CD4-positive, alpha-beta T cell (primary cell): ENCODE measurements at regions of chrX and their contacts with region 1.

Region 1: DNA sequence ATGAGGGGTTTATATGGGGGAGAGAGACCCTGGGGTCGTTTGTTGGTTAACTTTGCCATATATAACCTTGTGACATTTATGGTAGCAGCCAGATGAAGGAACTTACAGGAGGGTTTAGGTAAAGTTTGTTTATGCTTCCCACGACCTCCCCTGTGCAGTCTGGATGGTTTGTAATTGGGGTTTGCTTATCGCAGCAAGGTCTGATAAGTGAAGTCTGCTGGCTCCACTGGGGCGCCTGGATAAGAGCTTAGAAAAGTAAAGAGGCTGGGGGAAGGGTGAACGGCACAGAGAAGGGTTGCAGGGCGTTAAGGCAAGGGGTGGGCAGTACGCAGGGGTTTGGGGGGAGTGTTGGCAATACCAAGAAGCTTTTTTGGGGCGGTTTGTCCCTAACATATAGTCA is 98.7 kb downstream of the KDM6A start:
- DNase-seq: no peak
- ATAC-seq: no peak
- H3K4me3 ChIP-seq: no peak overlapping the region
- H3K4me3 Mint-ChIP-seq: no peak overlapping the region
- H3K27ac ChIP-seq: no peak overlapping the region
- H3K27ac Mint-ChIP-seq: no peak overlapping the region
- H3K4me1 ChIP-seq: no peaks in the 10 kb centered on the region
- H3K4me1 Mint-ChIP-seq: peaks cover 15% of the 10 kb centered on the region
- H3K27me3 ChIP-seq: no peaks in the 10 kb centered on the region
- H3K27me3 Mint-ChIP-seq: no peaks in the 10 kb centered on the region
- CTCF ChIP-seq: no peak

Region 2: GRCh38 chrX:45007598-45007997 is 35.9 kb after region 1 on chrX:
- CTCF ChIA-PET with region 1: no interaction called
- POLR2A ChIA-PET with region 1: no interaction called
- intact Hi-C with region 1: loop called in 1 of 2 experiments (anchors 1 kb)
- DNase-seq: no peak
- ATAC-seq: no peak
- H3K4me3 ChIP-seq: no peak overlapping the region
- H3K4me3 Mint-ChIP-seq: peak overlapping the region; percentile 38
- H3K27ac ChIP-seq: no peak overlapping the region
- H3K27ac Mint-ChIP-seq: no peak overlapping the region
- H3K4me1 ChIP-seq: peaks cover 2% of the 10 kb centered on the region
- H3K4me1 Mint-ChIP-seq: peaks cover 35% of the 10 kb centered on the region
- H3K27me3 ChIP-seq: no peaks in the 10 kb centered on the region
- H3K27me3 Mint-ChIP-seq: no peaks in the 10 kb centered on the region
- CTCF ChIP-seq: no peak